MCF 10A (cell line): ENCODE measurements at regions of chr2 and their contacts with region 1.

Region 1: GRCh38 chr2:215920244-215921100 is 92.9 kb downstream of the MREG start:
- DNase-seq: peak; percentile 80
- H3K4me3 Mint-ChIP-seq: no peak overlapping the region
- H3K27ac Mint-ChIP-seq: no peak overlapping the region
- H3K4me1 Mint-ChIP-seq: peaks cover 27% of the 10 kb centered on the region
- H3K27me3 Mint-ChIP-seq: no peaks in the 10 kb centered on the region
- CTCF ChIP-seq: peak; percentile 90

Region 2: DNA sequence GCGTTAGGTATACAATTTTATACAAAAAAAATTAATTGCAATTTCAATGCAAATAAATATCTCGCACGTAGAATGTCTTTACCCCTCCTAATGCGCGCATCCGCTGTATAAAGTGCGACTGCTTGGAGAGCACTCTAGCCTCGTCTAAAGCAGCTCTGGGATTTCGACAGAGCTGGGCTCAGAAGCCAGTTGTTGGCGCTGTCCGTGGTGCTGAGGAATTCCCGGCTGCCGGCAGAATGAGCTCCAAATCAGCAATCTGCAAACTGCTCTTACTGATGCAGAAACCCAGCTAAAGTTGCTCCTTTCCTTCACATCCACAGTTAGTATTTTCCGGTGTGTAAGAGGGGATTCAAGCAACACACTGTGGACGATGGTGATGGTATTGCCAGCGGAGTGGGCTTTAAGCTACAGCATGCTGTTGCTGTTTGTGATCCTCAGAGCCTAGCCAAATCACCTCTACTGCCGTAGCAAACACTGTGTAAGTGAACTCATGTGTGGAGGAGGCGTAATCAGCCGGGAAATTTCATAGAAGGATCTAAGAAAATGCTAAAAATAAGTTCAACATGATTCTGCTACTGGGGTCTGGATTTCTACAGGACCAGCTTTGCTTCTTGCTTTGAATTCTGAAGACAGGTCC is 1509.4 kb before region 1 on chr2 and contains the start of gene VWC2L:
- CTCF ChIA-PET with region 1: no interaction called
- POLR2A ChIA-PET with region 1: no interaction called
- intact Hi-C with region 1: loop called (anchors 10 kb)
- DNase-seq: peak; percentile 83
- H3K4me3 Mint-ChIP-seq: no peak within 1 kb of the TSS
- H3K27ac Mint-ChIP-seq: no peak within 1 kb of the TSS
- H3K4me1 Mint-ChIP-seq: peaks cover 5% of the 10 kb centered on the region
- H3K27me3 Mint-ChIP-seq: no peaks in the 10 kb centered on the region
- CTCF ChIP-seq: no peak
- total RNA-seq, gene VWC2L: not detected in 2 replicates

Region 3: GRCh38 chr2:215002500-215002899 is 918.0 kb before region 1 on chr2:
- CTCF ChIA-PET with region 1: interaction called, 3 read pairs
- POLR2A ChIA-PET with region 1: no interaction called
- intact Hi-C with region 1: loop called (anchors 5 kb)
- DNase-seq: peak; percentile 55
- H3K4me3 Mint-ChIP-seq: no peak overlapping the region
- H3K27ac Mint-ChIP-seq: no peak overlapping the region
- H3K4me1 Mint-ChIP-seq: no peaks in the 10 kb centered on the region
- H3K27me3 Mint-ChIP-seq: no peaks in the 10 kb centered on the region
- CTCF ChIP-seq: no peak

Region 4: DNA sequence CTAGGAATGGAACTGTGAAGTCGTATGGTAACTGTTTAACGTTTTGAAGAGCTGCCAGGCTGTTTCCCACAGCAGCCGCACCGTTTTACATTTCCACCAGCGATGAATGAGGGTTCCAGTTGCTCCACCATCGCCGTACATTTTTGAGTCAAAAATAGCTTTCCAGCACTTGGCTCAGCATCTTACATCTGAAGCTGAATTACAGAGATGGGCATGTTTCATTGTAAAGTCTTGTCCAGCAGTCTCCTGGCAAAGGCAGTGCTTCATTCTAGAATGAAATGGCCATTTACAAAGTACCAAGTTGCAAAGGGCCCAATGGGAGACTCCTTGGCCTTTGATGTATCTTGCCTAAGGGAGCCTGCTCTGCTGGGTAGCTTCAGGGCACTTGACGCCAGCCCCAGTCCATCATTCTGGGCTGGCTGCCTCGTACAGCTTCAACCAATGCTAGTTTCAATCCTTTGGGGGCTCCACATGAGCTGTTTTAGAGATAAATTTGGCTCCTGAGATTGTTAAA is 563.5 kb before region 1 on chr2:
- CTCF ChIA-PET with region 1: no interaction called
- POLR2A ChIA-PET with region 1: no interaction called
- intact Hi-C with region 1: loop called (anchors 10 kb)
- DNase-seq: no peak
- H3K4me3 Mint-ChIP-seq: no peak overlapping the region
- H3K27ac Mint-ChIP-seq: no peak overlapping the region
- H3K4me1 Mint-ChIP-seq: no peaks in the 10 kb centered on the region
- H3K27me3 Mint-ChIP-seq: no peaks in the 10 kb centered on the region
- CTCF ChIP-seq: no peak

Region 5: DNA sequence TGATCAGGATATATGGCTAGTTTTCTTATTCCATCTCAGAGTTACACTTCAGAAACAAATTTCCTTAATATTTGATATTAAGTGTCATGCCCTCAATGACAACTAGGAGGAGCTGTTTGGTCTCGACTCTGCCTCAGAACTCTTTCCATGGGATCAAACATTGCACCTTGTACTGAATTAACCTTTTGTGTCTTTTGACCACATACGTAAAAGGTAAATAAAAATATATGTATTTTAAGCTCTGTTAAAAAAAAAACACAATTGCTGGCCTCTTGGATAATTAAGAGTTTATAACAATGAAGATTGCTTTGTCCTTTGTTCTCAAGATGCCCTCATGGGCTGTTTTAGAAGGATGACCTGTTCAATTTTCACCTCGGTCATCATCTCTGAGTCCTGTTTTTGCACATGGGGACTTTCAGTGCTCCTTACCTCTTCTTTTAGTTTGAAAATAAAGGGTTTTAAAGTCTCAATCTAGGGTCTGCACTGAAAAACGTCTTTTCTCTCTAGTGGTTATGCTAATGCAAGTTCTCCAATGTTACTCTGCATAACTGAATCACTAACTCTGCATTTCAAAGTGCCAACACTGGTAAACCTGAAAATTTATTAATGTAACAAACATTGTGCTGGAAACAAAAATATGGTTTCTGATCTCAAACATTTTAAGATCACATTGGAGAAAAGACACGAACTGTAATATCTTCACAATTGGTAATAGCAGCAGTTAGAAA is 465.8 kb before region 1 on chr2:
- CTCF ChIA-PET with region 1: interaction called, 76 read pairs
- POLR2A ChIA-PET with region 1: no interaction called
- intact Hi-C with region 1: loop called (anchors 1 kb)
- DNase-seq: peak; percentile 52
- H3K4me3 Mint-ChIP-seq: no peak overlapping the region
- H3K27ac Mint-ChIP-seq: peak overlapping the region; percentile 49
- H3K4me1 Mint-ChIP-seq: peaks cover 8% of the 10 kb centered on the region
- H3K27me3 Mint-ChIP-seq: no peaks in the 10 kb centered on the region
- CTCF ChIP-seq: peak; percentile 66

Region 6: DNA sequence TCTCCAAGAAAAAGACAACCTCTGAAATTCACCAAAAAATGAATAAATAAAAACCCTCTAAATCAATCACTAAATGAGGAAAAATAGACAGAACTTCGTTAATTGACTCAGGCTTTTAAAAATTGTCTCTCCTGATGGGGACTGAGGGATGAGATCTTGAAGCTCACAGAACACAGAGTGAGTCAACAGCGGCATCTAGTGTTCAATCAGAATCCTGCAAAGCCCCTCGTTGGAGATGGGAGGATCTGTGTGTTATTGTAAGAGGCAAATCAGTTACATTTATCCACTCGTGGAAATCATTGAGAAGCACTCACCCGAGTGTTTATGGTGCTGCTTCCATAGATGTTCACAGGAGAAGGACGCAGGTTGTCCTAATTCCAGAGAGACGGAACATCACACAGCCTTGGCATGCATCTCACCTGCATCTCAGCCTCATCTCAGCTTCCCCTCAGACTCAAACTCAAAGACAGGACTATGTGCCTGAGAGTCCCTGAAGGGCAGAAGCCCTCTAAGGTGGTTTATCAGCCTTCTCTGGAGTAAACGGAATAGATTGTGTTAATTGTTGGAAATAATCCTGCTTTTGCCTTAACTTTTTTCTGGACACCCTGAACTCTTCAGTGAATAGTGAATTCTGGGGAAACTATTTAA is 10.9 kb after region 1 on chr2:
- CTCF ChIA-PET with region 1: interaction called, 12 read pairs
- POLR2A ChIA-PET with region 1: no interaction called
- intact Hi-C with region 1: no loop called
- DNase-seq: peak; percentile 82
- H3K4me3 Mint-ChIP-seq: no peak overlapping the region
- H3K27ac Mint-ChIP-seq: no peak overlapping the region
- H3K4me1 Mint-ChIP-seq: peaks cover 14% of the 10 kb centered on the region
- H3K27me3 Mint-ChIP-seq: no peaks in the 10 kb centered on the region
- CTCF ChIP-seq: peak; percentile 83